ENCODE measurements at regions of chr1 and their contacts with region 1.

Region 1: DNA sequence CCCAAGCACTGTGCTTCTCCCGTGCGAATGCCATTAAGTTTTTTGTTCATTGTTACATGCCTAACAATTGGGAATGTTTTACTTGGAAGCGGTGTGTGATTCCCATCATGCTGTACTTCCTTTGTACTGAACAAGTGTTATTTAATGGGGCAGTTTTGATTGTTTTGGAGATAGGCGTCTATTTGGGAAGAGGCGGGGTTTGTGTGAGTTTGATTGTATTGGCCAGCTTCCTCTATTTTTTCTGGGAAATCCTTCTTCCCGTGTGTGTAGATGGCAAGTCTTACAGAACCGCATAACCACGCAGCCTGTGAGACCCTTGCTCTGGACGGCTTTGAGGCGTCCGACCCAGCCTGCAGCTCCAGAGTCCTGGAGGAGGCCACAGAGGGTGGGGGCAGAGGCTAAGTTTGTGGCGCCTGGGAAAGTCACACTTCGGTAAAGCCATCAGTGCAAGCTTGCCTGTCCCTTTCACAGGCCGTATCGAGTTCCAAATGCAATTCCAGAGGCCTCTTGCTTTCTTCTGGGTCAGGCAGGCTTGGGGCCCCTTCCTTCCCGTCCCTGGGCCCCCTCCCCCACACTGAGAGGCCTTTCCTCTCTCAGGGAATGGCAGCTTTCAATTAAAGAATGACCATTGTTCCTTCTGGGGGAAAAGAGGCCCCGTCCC is 210.3 kb downstream of the TOMM20 start:
- DNase-seq: no peak
- ATAC-seq: peak; percentile 14

Region 2: DNA sequence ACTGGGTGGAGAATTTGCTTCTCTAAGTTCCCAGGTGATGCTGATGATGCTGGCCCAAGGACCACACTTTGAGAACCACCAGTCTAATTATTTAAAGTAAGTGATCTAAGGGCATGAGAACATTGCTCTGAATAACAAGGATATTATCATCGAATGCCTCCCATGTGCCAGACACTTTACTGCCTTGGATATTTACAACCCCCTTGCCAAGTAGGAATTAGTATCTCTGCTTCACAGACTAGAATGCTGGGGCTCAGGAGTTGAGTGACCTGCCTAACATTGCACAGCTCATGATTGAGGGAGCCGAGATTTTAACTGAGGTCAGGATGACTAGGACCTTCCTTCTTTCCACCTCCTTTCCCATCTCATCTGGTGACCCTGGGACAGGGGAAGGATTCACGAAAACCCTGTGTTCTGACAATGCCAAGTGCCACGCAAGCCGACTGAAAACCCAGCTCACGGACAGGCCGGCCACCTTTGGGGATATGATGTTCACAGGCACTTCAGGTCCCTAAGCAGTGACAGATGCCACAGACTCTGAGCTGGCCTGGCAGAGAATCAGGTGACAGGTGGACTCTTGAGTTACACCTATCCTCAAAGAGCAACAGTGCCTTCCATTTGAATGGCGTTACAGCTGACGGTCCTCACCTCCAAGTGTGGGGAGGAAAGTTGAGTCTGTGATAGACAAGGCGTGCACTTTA is 20.4 kb before region 1 on chr1:
- intact Hi-C with region 1: loop called (anchors 2 kb)
- DNase-seq: no peak
- ATAC-seq: peak; percentile 73

Region 3: GRCh38 chr1:234955107-234955731 is 36.9 kb after region 1 on chr1:
- intact Hi-C with region 1: no loop called
- DNase-seq: peak; percentile 88
- ATAC-seq: peak; percentile 93

Region 4: GRCh38 chr1:235075188-235075926 is 157.0 kb after region 1 on chr1:
- intact Hi-C with region 1: loop called (anchors 2 kb)
- DNase-seq: peak; percentile 82
- ATAC-seq: peak; percentile 70